Cardiac septum (tissue), 1 donor: ENCODE measurements at regions of chr20 and their contacts with region 1.

Region 1: DNA sequence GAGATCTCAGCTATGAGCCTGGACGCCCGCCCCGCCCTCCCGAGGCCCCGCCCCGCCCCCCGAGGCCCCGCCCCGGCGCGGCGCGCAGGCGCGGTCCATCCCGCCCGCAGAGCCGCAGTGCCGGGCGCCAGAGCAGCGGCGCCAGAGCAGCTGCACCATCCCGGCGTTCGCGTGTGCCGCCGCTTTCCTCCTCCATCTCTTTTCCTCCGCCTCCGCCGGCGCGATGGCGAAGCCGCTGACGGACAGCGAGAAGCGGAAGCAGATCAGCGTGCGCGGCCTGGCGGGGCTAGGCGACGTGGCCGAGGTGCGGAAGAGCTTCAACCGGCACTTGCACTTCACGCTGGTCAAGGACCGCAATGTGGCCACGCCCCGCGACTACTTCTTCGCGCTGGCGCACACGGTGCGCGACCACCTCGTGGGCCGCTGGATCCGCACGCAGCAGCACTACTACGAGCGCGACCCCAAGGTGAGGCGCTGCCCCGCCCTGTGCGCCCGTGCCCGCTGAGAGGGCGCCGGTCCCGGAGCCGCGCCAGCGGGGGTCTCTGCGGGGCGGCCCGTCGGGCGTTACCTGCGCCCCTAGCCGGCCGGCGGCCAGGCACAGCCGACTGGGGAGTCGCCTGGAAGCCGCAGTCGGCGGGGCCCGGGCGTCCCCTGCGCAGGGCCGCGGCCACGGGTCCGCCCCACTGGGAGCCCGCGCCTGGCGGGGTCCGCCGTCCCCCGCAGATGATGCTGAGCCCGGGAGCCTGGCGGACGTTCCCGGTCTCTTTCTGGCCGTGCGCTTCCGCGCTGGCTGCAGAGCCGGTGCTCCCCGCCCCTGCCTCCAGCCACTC is at the start of gene PYGB:
- DNase-seq: peak; percentile 91
- total RNA-seq, gene PYGB: 386 TPM

Region 2: DNA sequence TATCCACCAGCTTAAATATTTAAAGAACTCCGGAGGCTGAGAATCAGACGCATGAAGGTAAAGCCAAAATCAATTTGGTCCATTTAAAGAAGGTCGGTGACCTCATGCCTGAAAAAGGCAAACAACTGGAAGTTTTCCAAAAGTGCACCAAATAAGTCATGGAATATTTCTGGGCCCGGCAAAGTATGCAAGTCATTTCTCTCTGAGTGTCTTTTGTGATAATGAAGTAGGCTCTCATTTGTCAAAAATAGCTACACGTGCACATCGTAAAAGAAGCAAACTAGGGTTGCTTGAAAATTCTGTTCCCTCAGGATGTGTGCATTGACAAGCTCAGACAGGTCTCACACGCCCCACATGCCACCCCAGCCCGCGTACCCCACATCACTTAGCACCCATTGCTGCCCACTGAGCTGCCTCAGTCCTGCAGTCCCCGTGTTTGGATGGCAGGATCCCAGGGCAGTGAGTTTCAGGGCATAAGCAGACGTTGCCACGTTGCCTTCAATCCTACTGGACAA is 20.8 kb before region 1 on chr20:
- intact Hi-C with region 1: loop called (anchors 2 kb)
- DNase-seq: no peak

Region 3: DNA sequence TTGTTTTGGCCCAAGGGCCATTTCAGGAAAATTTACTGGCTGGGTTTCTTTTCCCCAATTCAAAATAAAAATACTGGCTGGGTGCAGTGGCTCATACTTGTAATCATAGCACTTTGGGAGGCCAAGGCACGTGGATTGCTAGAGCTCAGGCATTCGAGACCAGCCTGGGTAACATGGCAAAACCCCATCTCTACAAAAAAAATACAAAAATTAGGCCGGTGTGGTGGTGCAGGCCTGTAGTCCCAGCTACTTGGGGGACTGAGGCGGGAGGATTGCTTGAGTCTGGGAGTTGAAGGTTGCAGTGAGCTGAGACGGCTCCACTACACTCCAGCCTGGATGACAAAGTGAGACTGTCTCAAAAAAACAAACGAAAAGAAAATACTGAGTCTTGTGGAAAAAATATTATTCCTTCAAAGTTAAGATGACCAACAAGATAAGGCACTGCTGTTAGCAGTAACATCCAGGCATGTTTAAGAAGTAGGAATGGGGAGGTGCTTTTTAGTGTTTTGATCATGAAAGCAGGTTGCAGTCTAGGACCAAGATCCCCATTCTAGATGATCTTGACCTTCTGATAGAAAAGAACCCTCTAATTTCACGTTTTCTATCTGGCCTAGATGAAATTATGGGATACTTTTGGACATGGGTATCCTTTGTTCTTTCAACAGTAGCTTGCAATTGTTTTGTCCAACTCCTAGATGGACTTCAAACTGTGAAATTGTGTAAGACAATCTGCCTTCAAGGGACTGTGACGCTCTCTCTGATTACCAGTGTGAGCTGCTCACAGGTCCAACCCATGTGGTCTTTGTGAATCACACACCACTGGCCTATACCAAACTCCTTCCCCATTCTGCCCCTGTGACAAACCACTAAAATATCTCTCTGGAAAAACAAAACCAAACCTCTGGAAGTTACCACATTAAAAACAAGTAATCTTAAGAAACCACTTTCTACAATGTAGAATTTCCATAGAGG is 277.4 kb after region 1 on chr20:
- intact Hi-C with region 1: no loop called
- DNase-seq: peak; percentile 44